Endothelial cell of umbilical vein (primary cell): ENCODE measurements at regions of chr5 and their contacts with region 1.

Region 1: DNA sequence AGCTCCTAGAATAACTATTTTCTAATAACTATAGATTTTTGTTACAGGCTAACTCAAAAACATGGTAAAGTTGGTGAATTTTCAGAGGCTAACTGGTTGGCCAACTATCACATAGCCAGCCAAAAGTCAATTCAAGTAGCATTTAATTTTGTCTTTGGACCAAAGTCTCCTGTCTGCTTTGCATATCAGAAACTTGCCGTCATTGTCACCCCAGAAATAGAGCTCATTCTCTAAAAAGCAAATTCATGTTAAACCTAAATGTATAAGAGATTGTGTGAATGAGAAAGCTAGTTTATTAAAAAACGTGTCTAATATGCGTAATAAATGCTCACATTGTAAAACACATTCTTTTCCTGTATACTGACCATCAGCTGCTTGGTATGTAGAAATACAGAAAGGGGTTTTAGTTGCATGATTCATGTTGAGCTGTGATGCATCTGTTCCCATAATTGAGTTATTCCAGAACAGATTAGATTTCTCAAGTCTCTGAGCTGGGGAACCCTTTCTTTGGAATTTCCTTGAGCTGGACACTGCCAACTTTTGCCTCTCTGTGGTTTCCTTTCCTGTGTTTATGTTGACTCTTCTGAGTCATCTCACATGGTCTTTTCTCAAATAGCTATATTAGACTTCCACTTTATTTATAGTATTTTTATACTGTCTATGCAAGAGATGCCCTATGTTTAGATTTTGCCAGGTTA is 7.3 kb downstream of the SRFBP1 start:
- DNase-seq: peak; percentile 97
- H3K4me3 ChIP-seq: peak overlapping the region in 1 of 3 experiments; percentile 59
- H3K27ac ChIP-seq: peak overlapping the region; percentile 96
- H3K4me1 ChIP-seq: peaks cover 32% of the 10 kb centered on the region
- H3K27me3 ChIP-seq: no peaks in the 10 kb centered on the region
- CTCF ChIP-seq: no peak
- POLR2A ChIP-seq: peak; percentile 55

Region 2: GRCh38 chr5:121890297-121890858 is 78.7 kb before region 1 on chr5:
- CTCF ChIA-PET with region 1: no interaction called
- POLR2A ChIA-PET with region 1: no interaction called
- dilution Hi-C with region 1: no loop called
- intact Hi-C with region 1: no loop called
- DNase-seq: no peak
- H3K4me3 ChIP-seq: no peak overlapping the region
- H3K27ac ChIP-seq: no peak overlapping the region
- H3K4me1 ChIP-seq: no peaks in the 10 kb centered on the region
- H3K27me3 ChIP-seq: no peaks in the 10 kb centered on the region
- CTCF ChIP-seq: no peak
- POLR2A ChIP-seq: no peak

Region 3: DNA sequence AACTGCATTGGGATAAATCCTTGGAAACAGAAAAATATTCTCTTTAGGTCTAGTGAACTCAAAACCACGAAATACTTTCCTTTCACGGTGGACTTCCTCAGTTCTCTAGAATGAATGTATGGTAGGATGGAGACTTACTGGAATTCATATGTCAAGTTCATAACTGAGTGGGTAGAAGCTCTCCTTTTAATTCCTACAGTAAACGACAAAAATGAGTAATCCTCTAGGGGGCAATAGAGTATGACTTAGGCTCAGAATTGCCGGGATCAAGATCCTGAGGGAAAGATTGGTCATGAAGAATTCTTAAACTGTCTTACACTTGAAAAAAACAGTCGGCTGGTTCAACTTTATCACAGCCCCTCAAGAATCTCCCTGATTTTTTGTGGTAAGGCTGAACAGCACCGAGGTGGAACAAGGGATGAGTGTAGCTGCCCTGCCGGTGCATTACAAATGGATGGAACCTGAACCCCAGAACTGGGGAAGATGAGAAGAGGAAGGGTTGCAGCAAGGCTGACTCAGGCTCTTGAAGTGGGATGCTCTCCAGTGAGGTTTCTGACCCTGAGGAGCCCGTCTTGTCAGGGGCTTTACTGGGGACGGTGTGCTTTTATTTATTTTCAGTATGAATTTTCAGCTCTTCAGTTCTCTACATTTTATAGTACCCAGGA is 123.0 kb after region 1 on chr5:
- CTCF ChIA-PET with region 1: interaction called, 13 read pairs
- POLR2A ChIA-PET with region 1: no interaction called
- dilution Hi-C with region 1: no loop called
- intact Hi-C with region 1: no loop called
- DNase-seq: peak; percentile 48
- H3K4me3 ChIP-seq: no peak overlapping the region
- H3K27ac ChIP-seq: no peak overlapping the region
- H3K4me1 ChIP-seq: peaks cover 19% of the 10 kb centered on the region
- H3K27me3 ChIP-seq: no peaks in the 10 kb centered on the region
- CTCF ChIP-seq: peak; percentile 26 to 32
- POLR2A ChIP-seq: no peak

Region 4: GRCh38 chr5:122129306-122129705 is 160.2 kb after region 1 on chr5 and contains the start of gene ZNF474:
- CTCF ChIA-PET with region 1: no interaction called
- POLR2A ChIA-PET with region 1: no interaction called
- dilution Hi-C with region 1: no loop called
- intact Hi-C with region 1: loop called (anchors 1 kb)
- DNase-seq: peak; percentile 91
- H3K4me3 ChIP-seq: no peak within 1 kb of the TSS
- H3K27ac ChIP-seq: no peak within 1 kb of the TSS
- H3K4me1 ChIP-seq: no peaks in the 10 kb centered on the region
- H3K27me3 ChIP-seq: no peaks in the 10 kb centered on the region
- CTCF ChIP-seq: no peak
- POLR2A ChIP-seq: no peak
- total RNA-seq, gene ZNF474: 0.16 TPM in 1 of 2 replicates, not detected in the other

Region 5: GRCh38 chr5:122182491-122182921 is 213.4 kb after region 1 on chr5:
- CTCF ChIA-PET with region 1: no interaction called
- POLR2A ChIA-PET with region 1: interaction called, 4 read pairs
- dilution Hi-C with region 1: no loop called
- intact Hi-C with region 1: loop called (anchors 2 kb)
- DNase-seq: peak; percentile 93
- H3K4me3 ChIP-seq: peak overlapping the region in 1 of 3 experiments; percentile 57
- H3K27ac ChIP-seq: peak overlapping the region; percentile 84
- H3K4me1 ChIP-seq: peaks cover 41% of the 10 kb centered on the region
- H3K27me3 ChIP-seq: no peaks in the 10 kb centered on the region
- CTCF ChIP-seq: no peak
- POLR2A ChIP-seq: no peak

Region 6: DNA sequence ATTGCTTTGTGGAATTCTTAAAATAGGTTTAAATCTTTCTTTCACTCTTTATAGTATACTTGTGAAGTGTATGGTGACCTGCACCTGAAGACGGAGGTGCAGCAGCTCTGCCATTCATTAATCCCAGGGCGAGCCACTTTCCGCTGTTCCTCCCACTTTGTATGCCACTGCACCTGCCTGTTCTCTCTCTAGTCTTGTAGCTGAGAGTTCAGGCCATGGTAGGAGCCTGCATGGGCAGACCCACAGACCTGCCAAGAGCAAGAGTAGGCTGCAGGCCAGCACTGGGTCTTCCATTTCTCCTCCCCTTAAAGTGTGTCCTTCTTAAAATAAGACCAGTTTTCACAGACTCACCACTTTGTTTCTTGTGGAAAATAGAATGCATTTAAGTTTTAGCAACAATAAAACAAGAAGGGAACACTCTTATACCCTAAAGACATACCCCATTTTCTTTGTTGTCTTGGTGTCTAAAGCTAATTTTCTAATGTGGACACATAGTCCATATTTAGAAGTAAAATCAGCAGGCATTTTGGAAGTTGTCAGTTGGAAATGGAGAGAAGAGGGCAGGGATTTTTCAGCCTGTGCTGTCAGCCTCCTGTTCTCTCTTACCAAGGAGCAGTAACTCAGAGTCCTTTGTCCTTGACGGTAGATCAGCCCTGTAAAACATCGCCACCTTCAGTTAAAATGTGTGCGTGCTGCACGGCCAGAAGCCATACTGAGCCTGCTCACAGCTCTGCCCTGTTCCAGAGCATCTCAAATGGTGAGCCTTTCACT is 446.2 kb after region 1 on chr5:
- CTCF ChIA-PET with region 1: no interaction called
- POLR2A ChIA-PET with region 1: no interaction called
- dilution Hi-C with region 1: no loop called
- intact Hi-C with region 1: loop called (anchors 5 kb)
- DNase-seq: peak; percentile 74
- H3K4me3 ChIP-seq: no peak overlapping the region
- H3K27ac ChIP-seq: no peak overlapping the region
- H3K4me1 ChIP-seq: no peaks in the 10 kb centered on the region
- H3K27me3 ChIP-seq: no peaks in the 10 kb centered on the region
- CTCF ChIP-seq: peak; percentile 62 to 69
- POLR2A ChIP-seq: no peak